Activated CD4-positive, alpha-beta T cell treated with anti-CD3 and anti-CD28 coated beads, Interleukin-2, amount 10 ng/mL, durations not matched to agents 24 days and 14 days (primary cell): ENCODE measurements at regions of chr6 and their contacts with region 1.

Region 1: DNA sequence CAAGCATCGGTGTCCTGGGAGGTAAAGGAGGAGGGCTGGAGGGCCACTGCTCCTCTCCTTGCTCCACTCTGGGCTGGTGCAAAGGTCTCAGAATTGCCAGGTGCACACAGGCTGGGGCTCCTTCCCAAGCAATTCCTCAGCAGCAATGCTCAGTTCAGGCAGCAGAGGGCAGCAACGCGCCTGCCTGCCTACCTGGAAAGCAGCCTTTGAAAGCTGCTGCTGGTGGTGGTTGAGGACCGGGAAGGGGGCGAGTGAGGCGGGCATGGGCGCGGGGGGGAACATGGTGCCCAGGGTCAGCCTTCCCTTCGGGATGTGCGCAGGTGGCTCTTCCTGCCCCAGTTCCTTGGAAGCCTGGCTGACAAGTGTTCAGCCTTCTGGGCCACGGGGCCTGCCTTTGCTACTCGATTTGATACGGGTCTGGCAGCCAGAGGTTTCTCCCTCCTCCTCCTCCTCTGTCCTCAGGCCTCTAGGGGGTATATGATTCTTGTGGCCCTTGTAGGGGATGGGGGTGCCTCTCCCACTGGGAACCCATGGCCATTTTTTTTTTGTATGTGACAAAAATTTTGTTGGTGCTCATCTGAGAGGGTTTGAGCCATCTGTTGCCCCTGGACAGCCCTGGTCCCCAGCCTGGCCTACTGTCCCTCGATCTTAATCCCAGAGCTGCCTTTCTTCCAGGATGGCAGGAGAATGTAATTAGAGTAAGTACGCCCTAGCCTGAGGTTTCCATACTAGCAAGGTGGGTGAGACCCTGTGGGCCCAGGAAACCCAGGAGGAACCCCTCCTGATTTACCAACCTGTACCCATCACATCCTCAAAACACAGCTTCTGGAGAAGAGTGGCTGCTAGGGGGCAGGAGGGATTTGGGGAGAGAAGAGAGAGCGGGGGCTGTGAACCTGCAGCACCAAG is 20.1 kb downstream of the MRPS18A start:
- DNase-seq: peak; percentile 95
- H3K4me3 Mint-ChIP-seq: peak overlapping the region; percentile 52
- H3K27ac Mint-ChIP-seq: peak overlapping the region; percentile 76
- H3K4me1 Mint-ChIP-seq: peaks cover 45% of the 10 kb centered on the region
- H3K27me3 Mint-ChIP-seq: no peaks in the 10 kb centered on the region

Region 2: GRCh38 chr6:43465948-43466347 is 201.6 kb before region 1 on chr6:
- intact Hi-C with region 1: no loop called
- DNase-seq: no peak
- H3K4me3 Mint-ChIP-seq: no peak overlapping the region
- H3K27ac Mint-ChIP-seq: no peak overlapping the region
- H3K4me1 Mint-ChIP-seq: no peaks in the 10 kb centered on the region
- H3K27me3 Mint-ChIP-seq: peaks cover 35% of the 10 kb centered on the region

Region 3: DNA sequence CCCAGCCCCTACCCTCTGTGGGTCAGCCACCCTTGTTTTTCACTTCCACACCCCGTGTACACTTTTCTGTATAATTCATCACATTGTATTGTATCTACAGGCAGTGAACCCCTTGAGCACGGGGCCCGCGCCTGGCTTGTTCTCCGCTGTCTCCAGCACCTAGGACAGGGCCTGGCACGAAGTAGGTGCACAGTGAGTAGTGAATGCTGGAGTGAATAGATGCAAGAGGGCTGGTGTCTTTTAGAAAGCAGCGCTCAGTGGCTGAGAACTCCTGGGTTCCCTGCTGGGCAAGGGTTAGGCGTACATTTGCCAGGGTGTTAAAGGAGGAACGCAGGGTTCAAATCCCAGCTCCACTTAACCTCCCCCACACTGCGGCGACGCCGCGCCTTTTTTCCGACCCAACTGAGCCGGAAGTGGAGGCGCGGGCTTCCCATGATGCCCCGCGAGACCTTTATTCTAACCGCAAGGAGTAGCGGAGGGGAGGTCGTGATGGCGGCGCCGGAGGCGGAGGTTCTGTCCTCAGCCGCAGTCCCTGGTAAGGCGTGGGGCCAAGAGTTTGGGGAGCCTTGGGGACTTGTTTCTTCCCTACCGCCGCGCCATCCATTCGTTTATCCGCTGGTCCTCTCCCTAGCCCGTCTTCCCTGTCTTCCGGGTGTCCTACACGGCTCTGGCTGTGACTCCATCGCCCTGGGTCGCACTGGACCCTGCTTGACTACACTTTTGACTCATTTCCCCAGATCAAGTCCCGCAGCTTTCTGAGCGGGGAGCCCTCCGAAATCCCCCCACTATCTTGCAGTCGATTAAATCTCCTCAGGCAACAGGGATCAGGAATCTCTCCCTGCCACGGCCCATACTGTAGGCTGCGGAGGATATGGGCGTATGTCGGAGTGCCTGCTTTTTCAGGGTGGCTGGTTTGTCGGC is 31.9 kb before region 1 on chr6 and contains the start of gene MAD2L1BP:
- intact Hi-C with region 1: loop called (anchors 2 kb)
- DNase-seq: peak; percentile 97
- H3K4me3 Mint-ChIP-seq: peak within 1 kb of the TSS; percentile 99
- H3K27ac Mint-ChIP-seq: peak within 1 kb of the TSS; percentile 96
- H3K4me1 Mint-ChIP-seq: peaks cover 40% of the 10 kb centered on the region
- H3K27me3 Mint-ChIP-seq: no peaks in the 10 kb centered on the region
- total RNA-seq, gene MAD2L1BP: 36.3 and 40.2 TPM in 2 replicates

Region 4: DNA sequence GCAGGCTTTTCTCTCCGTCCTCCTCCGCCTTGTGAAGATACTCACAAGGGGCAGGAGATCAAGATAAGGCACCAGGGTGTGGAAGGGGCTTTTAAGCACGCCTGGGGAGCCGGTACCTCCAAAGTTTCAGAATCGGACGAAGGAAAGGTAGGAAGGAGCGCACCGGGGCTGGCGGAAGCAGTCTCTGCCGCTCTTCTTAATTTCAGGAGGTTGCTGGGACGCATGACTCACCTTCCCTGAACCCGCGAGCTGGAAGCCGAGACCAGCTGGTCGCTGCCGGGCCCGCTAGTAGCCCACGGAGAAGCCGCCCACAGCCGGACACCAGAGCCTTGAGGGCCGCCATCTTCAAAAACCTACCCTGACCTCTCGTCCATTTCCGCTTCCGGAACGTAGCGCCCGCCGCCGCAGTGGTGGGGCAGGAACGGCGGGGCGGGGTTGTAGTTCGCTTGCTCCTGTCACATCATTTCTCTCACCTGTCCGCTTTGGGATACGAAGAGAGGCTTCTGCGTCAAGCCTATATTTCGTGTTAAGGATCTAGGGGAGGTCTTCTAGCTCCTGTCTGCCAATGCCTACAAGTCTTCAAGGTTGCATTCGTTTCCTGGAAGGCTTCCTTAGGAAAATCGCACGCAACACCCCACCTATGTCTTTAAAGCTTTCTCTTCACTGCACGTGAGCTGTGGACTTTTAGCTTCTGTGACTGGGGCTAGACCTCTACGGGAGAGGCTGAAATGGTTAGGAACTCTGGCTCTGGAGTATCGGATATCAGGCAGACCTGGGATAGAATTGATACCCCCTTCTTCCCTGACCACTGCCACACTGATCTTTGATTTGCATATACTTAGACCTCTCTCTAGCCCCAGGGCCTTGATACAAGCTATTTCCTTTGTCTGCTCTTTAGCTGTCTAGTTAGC is 20.2 kb after region 1 on chr6 and contains the start of gene MRPS18A:
- intact Hi-C with region 1: loop called (anchors 1 kb)
- DNase-seq: peak; percentile 95
- H3K4me3 Mint-ChIP-seq: peak within 1 kb of the TSS; percentile 93
- H3K27ac Mint-ChIP-seq: peak within 1 kb of the TSS; percentile 84
- H3K4me1 Mint-ChIP-seq: peaks cover 36% of the 10 kb centered on the region
- H3K27me3 Mint-ChIP-seq: peaks cover 2% of the 10 kb centered on the region
- total RNA-seq, gene MRPS18A: 47.4 and 50.1 TPM in 2 replicates

Region 5: GRCh38 chr6:43708860-43709653 is 41.6 kb after region 1 on chr6:
- intact Hi-C with region 1: loop called (anchors 1 kb)
- DNase-seq: no peak
- H3K4me3 Mint-ChIP-seq: no peak overlapping the region
- H3K27ac Mint-ChIP-seq: peak overlapping the region; percentile 79
- H3K4me1 Mint-ChIP-seq: peaks cover 24% of the 10 kb centered on the region
- H3K27me3 Mint-ChIP-seq: peaks cover 36% of the 10 kb centered on the region

Region 6: DNA sequence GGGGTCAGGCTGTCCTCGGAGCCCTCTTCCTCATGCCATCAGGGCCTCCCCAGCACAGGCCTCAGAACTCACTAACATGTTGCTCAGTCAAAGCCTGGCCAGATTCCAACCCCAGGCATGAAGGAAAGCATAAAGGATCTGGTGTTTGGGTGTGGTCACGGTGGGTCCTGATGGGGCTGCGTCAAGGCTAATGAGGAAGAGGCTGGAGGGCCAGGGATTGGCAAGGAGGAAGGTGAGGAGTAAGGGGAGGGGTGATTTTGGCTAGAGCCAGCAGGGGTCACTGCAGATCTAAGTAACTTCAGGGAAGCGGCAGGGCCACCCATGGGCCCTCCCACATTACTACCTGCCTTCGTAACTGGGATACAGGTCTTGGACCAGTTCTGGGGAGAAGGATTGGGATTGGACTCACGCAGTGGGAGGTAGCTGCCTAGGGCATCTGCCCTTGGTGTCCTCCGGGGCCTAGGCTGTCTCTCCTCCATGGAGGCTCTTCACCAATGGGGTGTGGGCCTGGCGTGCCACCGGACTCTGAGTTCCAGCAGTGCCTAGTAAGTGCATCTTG is 56.3 kb after region 1 on chr6:
- intact Hi-C with region 1: loop called (anchors 1 kb)
- DNase-seq: peak; percentile 89
- H3K4me3 Mint-ChIP-seq: no peak overlapping the region
- H3K27ac Mint-ChIP-seq: no peak overlapping the region
- H3K4me1 Mint-ChIP-seq: peaks cover 22% of the 10 kb centered on the region
- H3K27me3 Mint-ChIP-seq: peaks cover 5% of the 10 kb centered on the region